MCF 10A (cell line): ENCODE measurements at regions of chr2 and their contacts with region 1.

Region 1: DNA sequence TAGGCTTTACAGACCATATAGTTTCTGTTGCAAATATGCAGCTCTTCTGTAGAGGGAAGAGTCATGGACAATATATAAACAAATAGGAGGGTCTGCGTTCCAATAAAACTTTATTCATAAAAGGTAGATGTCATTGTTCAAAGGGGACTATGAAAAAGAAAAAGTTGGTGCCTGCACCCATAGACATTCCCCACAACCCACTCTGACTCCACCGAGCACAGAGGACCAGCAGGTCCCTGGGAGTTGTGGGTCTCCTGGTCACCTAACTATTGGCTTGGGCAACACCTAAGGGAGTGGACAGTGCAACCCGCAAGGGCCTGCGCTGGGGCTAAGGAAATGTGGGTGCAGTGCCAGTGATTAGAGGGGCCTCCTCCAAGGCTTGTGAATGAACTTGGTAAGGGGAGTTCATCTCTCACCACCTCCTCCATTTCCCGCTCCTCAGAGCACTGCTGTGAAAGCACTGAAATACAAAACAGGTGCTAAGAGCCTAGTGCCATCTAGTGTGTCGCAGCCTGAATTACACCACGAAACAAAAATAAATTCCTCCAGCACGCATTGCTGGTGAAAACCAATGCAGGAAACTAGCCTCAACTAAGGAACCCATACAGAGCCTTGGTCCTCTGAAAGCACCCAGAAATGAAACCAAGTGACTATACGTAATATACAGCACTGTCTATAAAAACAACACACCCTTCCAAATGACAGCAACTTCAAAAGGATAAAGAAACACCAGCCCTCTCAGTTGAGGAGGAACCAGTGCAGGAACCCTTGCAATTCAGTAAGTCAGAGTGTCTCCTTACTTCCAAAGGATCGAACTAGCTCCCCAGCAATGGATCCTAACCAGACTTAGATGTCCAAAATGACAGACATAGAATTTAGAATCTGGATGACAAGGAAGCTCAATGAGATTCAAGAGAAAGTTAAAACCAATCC is 166.6 kb downstream of the RNF144A start:
- DNase-seq: peak; percentile 49
- H3K4me3 Mint-ChIP-seq: no peak overlapping the region
- H3K27ac Mint-ChIP-seq: no peak overlapping the region
- H3K4me1 Mint-ChIP-seq: no peaks in the 10 kb centered on the region
- H3K27me3 Mint-ChIP-seq: peaks cover 39% of the 10 kb centered on the region
- CTCF ChIP-seq: peak; percentile 40

Region 2: DNA sequence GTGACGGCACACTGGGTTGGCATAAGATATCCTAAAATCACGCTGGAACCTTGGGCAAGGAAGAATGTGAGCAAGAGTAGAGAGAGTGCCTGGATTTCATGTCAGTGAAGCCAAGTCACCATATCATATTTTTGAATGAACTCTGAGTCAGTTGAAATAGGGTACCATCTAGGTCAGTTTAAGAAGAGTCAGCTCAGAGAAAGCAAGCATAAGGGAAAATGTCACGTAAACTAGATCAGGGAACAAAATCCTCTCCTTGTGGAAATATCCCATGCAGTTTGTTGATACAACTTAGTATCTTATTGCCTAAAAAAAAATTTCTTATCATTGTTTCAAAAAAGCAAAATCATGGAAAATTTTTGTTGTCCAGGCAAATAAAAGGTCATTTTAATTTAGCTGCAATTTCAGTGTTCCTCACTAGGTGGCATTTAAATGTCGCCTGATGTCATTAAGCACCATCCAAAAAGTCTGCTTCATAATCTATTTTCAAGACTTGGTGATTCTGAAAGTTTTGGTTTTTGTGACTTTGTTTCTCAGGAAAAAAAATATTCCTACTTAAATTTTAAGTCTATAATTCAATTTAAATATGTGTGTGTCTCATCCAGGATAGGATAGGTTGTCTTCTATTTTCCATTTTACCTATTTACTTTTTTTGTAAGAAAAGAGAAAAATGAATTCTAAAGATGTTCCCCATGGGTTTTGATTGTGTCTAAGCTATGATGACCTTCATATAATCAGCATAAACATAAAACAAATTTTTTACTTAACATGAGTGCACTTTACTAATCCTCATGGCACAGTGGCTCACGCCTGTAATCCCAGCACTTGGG is 186.7 kb before region 1 on chr2:
- CTCF ChIA-PET with region 1: interaction called, 30 read pairs
- POLR2A ChIA-PET with region 1: no interaction called
- intact Hi-C with region 1: loop called (anchors 2 kb)
- DNase-seq: peak; percentile 46
- H3K4me3 Mint-ChIP-seq: no peak overlapping the region
- H3K27ac Mint-ChIP-seq: no peak overlapping the region
- H3K4me1 Mint-ChIP-seq: no peaks in the 10 kb centered on the region
- H3K27me3 Mint-ChIP-seq: peaks cover 68% of the 10 kb centered on the region
- CTCF ChIP-seq: peak; percentile 33

Region 3: DNA sequence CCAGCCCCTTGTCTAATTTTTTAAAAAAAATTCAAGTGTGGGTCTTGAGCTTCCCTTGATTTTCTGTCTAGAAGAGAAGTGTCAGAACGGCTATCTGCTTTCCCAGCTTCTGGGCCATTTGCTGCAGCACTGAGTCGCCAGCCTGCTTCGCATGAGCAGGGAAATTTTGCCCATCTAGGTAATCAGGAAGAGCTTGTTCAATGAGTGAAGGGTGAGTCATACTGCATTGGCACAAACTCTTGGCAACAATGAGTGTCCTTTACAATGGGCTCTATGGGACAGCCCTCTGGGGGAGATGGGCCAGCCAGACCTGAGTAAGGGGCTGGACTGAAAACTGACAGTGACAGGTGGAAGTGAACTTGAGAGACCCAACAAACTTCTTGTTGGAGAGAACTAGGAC is 169.0 kb before region 1 on chr2:
- CTCF ChIA-PET with region 1: no interaction called
- POLR2A ChIA-PET with region 1: no interaction called
- intact Hi-C with region 1: no loop called
- DNase-seq: peak; percentile 78
- H3K4me3 Mint-ChIP-seq: no peak overlapping the region
- H3K27ac Mint-ChIP-seq: no peak overlapping the region
- H3K4me1 Mint-ChIP-seq: no peaks in the 10 kb centered on the region
- H3K27me3 Mint-ChIP-seq: peaks cover 12% of the 10 kb centered on the region
- CTCF ChIP-seq: no peak

Region 4: DNA sequence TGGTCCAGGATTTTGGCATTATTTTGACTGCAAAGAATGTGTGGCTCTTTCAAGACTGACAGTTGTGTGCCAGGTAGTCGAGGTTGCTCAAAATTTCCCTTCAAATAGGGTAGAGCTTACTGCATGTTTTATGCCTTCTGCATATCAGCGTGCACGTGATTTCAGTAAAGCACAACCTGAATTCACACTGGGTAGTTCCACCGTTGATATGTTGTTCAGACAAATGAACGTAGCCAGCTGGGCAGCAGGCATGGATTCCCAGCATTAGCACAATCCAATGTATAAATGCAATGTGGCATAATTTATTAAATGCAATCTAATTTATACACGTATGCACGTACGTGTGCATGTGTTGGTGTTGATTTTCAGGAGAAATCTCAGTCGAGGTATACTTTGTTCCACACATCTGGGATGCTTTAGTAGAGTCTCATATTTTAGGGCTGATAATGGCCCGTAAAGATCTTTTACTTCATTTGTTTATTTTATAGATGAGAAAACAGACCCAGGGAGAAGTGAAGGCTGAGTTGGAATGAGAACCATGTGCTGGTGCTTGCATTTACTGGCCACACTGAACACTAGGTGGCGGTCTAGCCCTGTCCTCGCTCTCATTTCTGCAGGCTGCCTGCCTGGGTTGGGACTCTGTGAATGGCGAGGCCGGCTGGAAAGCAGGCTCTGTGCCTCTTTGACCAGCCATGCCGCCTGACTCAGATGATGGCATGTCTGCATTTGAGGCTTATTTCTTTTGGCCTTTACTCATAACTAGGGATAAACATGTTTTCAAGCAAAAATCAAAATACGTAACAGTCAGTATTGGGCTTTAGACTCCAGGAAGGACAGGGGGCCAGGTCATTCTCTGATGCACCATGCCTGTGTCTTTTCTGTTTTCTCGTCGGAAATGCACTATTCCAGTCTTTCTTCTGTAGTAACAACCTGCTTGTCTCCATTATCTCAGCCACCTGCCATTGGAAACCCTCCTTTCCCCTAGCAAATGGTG is 46.2 kb before region 1 on chr2:
- CTCF ChIA-PET with region 1: no interaction called
- POLR2A ChIA-PET with region 1: no interaction called
- intact Hi-C with region 1: loop called (anchors 10 kb)
- DNase-seq: peak; percentile 79
- H3K4me3 Mint-ChIP-seq: no peak overlapping the region
- H3K27ac Mint-ChIP-seq: no peak overlapping the region
- H3K4me1 Mint-ChIP-seq: no peaks in the 10 kb centered on the region
- H3K27me3 Mint-ChIP-seq: peaks cover 82% of the 10 kb centered on the region
- CTCF ChIP-seq: peak; percentile 45